Caco-2 (cell line): ENCODE measurements at regions of chr1 and their contacts with region 1.

Region 1: GRCh38 chr1:45011837-45012638 is at the start of gene UROD:
- DNase-seq: peak; percentile 91 to 93
- H3K4me3 ChIP-seq: peak within 1 kb of the TSS; percentile 62
- H3K4me3 Mint-ChIP-seq: peak within 1 kb of the TSS; percentile 71
- H3K27ac Mint-ChIP-seq: peak within 1 kb of the TSS; percentile 58
- H3K4me1 ChIP-seq: peaks cover 4% of the 10 kb centered on the region; the same call in 1 of the 2 replicates
- H3K4me1 Mint-ChIP-seq: no peaks in the 10 kb centered on the region
- H3K27me3 ChIP-seq: no peaks in the 10 kb centered on the region
- H3K27me3 Mint-ChIP-seq: no peaks in the 10 kb centered on the region
- CTCF ChIP-seq: no peak
- total RNA-seq, gene UROD: 44.8 and 54.3 TPM in 2 replicates

Region 2: DNA sequence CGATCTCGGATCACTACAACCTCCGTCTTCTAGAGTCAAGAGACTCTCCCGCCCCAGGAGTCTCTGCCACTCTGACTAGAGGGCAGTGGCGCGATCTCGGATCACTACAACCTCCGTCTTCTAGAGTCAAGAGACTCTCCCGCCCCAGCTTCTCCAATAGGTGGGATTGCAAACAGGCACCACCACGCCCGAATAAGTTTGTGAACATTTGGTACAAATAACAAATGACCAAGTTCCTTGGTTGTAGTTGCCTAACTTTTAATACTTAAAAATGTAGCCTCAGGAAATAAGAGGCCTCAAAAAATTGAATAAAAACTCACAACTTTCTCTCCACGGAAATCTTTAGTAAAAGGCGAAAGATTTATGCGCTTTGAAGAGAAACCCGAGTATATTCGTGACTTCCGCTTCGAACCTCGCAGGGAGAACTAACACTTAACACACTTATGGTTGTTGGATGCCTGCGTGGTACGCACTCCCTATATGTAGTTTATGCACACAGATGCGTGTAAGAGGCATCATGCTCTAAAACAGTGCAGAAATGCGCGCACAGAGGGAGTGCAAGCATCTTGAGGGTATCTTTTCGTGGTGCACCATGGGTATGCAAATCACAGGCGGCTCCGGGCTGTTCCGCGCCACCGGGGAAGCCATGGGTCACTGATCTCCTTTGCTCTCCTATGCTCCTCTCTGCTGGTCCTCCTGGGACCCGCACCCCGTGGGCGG is 192.3 kb before region 1 on chr1:
- CTCF ChIA-PET with region 1: no interaction called
- POLR2A ChIA-PET with region 1: interaction called, 15 read pairs
- intact Hi-C with region 1: no loop called
- DNase-seq: peak; percentile 86 to 95
- H3K4me3 ChIP-seq: peak overlapping the region; percentile 49
- H3K4me3 Mint-ChIP-seq: peak overlapping the region; percentile 80
- H3K27ac Mint-ChIP-seq: peak overlapping the region; percentile 100
- H3K4me1 ChIP-seq: 0 out of 2 replicates have a peak, but pooled peaks cover 7% of the 10 kb centered on the region
- H3K4me1 Mint-ChIP-seq: peaks cover 8% of the 10 kb centered on the region
- H3K27me3 ChIP-seq: no peaks in the 10 kb centered on the region
- H3K27me3 Mint-ChIP-seq: no peaks in the 10 kb centered on the region
- CTCF ChIP-seq: no peak

Region 3: GRCh38 chr1:44842862-44843655 is 169.0 kb before region 1 on chr1 and contains the start of gene PTCH2:
- CTCF ChIA-PET with region 1: interaction called, 7 read pairs
- POLR2A ChIA-PET with region 1: no interaction called
- intact Hi-C with region 1: loop called (anchors 2 kb)
- DNase-seq: peak; percentile 62 to 66
- H3K4me3 ChIP-seq: peak within 1 kb of the TSS; percentile 48
- H3K4me3 Mint-ChIP-seq: peak within 1 kb of the TSS; percentile 71
- H3K27ac Mint-ChIP-seq: no peak within 1 kb of the TSS
- H3K4me1 ChIP-seq: no peaks in the 10 kb centered on the region
- H3K4me1 Mint-ChIP-seq: no peaks in the 10 kb centered on the region
- H3K27me3 ChIP-seq: no peaks in the 10 kb centered on the region
- H3K27me3 Mint-ChIP-seq: no peaks in the 10 kb centered on the region
- CTCF ChIP-seq: no peak
- total RNA-seq, gene PTCH2: 0.44 and 0.48 TPM in 2 replicates

Region 4: GRCh38 chr1:44903011-44903680 is 108.9 kb before region 1 on chr1:
- CTCF ChIA-PET with region 1: no interaction called
- POLR2A ChIA-PET with region 1: no interaction called
- intact Hi-C with region 1: no loop called
- DNase-seq: no peak
- H3K4me3 ChIP-seq: no peak overlapping the region
- H3K4me3 Mint-ChIP-seq: no peak overlapping the region
- H3K27ac Mint-ChIP-seq: no peak overlapping the region
- H3K4me1 ChIP-seq: no peaks in the 10 kb centered on the region
- H3K4me1 Mint-ChIP-seq: peaks cover 4% of the 10 kb centered on the region
- H3K27me3 ChIP-seq: no peaks in the 10 kb centered on the region
- H3K27me3 Mint-ChIP-seq: no peaks in the 10 kb centered on the region
- CTCF ChIP-seq: no peak

Region 5: DNA sequence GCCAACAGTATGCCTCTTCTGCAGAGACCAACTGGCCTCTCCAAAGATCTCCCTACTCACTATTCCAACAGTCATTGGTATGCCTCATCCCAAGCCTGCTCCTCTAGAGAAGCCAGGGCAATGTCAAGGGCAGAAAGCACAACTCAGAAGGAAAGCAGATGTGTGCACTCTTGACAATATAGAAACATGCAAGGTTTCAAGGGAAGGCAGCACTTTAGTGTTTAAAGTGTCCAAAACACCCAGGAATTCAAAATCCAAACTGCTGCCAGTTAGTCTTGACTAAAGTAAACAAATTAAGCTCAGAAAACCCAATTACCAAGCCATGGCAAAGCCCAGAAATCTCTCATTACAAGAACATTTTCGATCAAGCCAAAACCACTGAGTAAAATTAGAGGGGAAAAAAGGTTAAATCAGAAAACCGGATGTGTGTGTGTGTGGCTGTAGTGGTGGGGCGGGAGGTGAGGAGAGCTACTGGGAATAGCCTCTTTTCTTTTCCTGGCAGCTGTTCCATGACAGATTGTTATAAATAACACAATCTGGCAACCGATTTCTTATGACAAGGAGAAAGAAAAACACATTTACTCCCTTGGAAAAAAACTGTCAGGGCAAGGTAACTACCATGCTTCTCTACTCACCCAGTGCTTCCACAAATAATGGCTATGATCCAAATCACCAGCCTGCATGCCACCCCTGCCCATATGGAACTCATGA is 64.8 kb before region 1 on chr1:
- CTCF ChIA-PET with region 1: no interaction called
- POLR2A ChIA-PET with region 1: no interaction called
- intact Hi-C with region 1: no loop called
- DNase-seq: no peak
- H3K4me3 ChIP-seq: no peak overlapping the region
- H3K4me3 Mint-ChIP-seq: no peak overlapping the region
- H3K27ac Mint-ChIP-seq: no peak overlapping the region
- H3K4me1 ChIP-seq: peaks cover 13% of the 10 kb centered on the region
- H3K4me1 Mint-ChIP-seq: peaks cover 10% of the 10 kb centered on the region
- H3K27me3 ChIP-seq: no peaks in the 10 kb centered on the region
- H3K27me3 Mint-ChIP-seq: no peaks in the 10 kb centered on the region
- CTCF ChIP-seq: no peak

Region 6: DNA sequence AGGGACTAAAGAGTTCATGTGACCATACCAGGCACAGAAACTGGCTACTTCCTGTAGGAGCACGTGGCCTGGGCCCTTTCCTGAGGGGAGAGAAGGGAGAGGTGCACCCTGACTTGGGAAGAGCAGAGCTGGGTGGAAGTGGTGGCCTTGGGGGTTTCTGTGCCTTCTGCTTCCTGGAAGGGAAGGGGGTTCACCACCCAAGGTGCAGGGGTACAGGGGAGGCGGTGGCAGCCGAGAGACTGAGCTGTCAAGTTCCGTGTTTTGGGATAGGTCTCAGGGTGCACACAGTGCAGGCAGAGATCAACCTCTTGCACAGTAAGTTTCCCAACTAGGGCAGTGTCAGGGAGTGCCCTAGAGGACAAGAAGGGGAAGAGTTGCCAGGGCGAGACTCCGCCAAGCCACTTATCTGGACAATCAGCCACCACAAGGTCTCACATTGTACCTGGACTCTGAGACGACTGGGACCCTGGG is 11.0 kb before region 1 on chr1:
- CTCF ChIA-PET with region 1: no interaction called
- POLR2A ChIA-PET with region 1: interaction called, 15 read pairs
- intact Hi-C with region 1: no loop called
- DNase-seq: no peak
- H3K4me3 ChIP-seq: no peak overlapping the region
- H3K4me3 Mint-ChIP-seq: no peak overlapping the region
- H3K27ac Mint-ChIP-seq: no peak overlapping the region
- H3K4me1 ChIP-seq: no peaks in the 10 kb centered on the region
- H3K4me1 Mint-ChIP-seq: peaks cover 11% of the 10 kb centered on the region
- H3K27me3 ChIP-seq: no peaks in the 10 kb centered on the region
- H3K27me3 Mint-ChIP-seq: no peaks in the 10 kb centered on the region
- CTCF ChIP-seq: no peak

Region 7: DNA sequence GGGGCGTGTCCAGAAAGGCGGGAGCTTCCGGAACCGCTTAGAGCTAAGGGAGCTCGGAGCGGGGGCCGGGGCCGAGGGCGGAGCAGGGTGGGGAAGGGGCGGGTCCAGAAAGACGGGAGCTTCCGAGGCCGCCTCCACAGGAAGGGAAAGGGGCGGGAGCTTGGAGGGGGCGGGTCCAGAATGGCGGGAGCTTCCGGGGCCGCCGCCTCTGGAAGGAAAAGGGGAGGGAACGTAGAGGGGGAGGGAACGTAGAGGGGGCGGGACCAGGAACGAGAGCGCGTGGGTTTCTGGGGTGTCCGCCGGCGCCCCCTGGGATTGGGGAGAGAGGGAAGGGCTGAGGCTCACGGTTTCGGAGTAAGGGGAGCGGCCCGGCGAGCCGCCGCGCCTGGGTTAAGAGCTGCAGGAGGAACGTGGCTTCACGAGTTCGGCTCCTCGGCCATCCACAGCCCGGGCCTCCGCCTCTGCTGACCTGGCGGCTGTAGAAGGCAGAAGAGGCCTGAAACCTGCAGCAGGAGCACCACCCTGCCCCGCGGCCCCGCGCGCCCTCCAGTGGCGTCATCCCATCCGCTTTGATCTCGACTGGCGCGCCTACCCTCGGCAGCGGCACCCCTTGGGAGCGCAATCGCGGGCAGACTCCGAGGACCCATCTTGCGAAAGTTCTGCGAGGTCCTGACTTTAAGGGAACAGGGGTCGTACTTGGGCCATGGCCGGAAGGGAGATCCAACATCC is 291.7 kb after region 1 on chr1:
- CTCF ChIA-PET with region 1: interaction called, 20 read pairs
- POLR2A ChIA-PET with region 1: interaction called, 16 read pairs
- intact Hi-C with region 1: loop called (anchors 1 kb)
- DNase-seq: peak; percentile 93 to 97
- H3K4me3 ChIP-seq: peak overlapping the region; percentile 78
- H3K4me3 Mint-ChIP-seq: peak overlapping the region; percentile 77
- H3K27ac Mint-ChIP-seq: peak overlapping the region; percentile 87
- H3K4me1 ChIP-seq: peaks cover 7% of the 10 kb centered on the region; the same call in 1 of the 2 replicates
- H3K4me1 Mint-ChIP-seq: peaks cover 22% of the 10 kb centered on the region
- H3K27me3 ChIP-seq: no peaks in the 10 kb centered on the region
- H3K27me3 Mint-ChIP-seq: no peaks in the 10 kb centered on the region
- CTCF ChIP-seq: peak; percentile 47 to 68

Region 8: GRCh38 chr1:45569962-45570581 is 558.0 kb after region 1 on chr1:
- CTCF ChIA-PET with region 1: no interaction called
- POLR2A ChIA-PET with region 1: no interaction called
- intact Hi-C with region 1: loop called (anchors 10 kb)
- DNase-seq: peak; percentile 66 to 67
- H3K4me3 ChIP-seq: no peak overlapping the region
- H3K4me3 Mint-ChIP-seq: no peak overlapping the region
- H3K27ac Mint-ChIP-seq: no peak overlapping the region
- H3K4me1 ChIP-seq: no peaks in the 10 kb centered on the region
- H3K4me1 Mint-ChIP-seq: no peaks in the 10 kb centered on the region
- H3K27me3 ChIP-seq: no peaks in the 10 kb centered on the region
- H3K27me3 Mint-ChIP-seq: no peaks in the 10 kb centered on the region
- CTCF ChIP-seq: peak; percentile 83 to 91